ENCODE measurements at regions of chr12 and their contacts with region 1.

Region 1: GRCh38 chr12:50074936-50075807 is 10.0 kb upstream of the SMARCD1 start:
- DNase-seq: peak; percentile 77 to 94 (median 90)
- ATAC-seq: peak; percentile 91 to 97 (median 95)
- H3K4me3 ChIP-seq: no peak overlapping the region
- H3K27ac ChIP-seq: no peak overlapping the region
- H3K4me1 ChIP-seq: no peaks in the 10 kb centered on the region
- H3K27me3 ChIP-seq: no peaks in the 10 kb centered on the region
- CTCF ChIP-seq: peak; percentile 85 to 94 (median 90)

Region 2: DNA sequence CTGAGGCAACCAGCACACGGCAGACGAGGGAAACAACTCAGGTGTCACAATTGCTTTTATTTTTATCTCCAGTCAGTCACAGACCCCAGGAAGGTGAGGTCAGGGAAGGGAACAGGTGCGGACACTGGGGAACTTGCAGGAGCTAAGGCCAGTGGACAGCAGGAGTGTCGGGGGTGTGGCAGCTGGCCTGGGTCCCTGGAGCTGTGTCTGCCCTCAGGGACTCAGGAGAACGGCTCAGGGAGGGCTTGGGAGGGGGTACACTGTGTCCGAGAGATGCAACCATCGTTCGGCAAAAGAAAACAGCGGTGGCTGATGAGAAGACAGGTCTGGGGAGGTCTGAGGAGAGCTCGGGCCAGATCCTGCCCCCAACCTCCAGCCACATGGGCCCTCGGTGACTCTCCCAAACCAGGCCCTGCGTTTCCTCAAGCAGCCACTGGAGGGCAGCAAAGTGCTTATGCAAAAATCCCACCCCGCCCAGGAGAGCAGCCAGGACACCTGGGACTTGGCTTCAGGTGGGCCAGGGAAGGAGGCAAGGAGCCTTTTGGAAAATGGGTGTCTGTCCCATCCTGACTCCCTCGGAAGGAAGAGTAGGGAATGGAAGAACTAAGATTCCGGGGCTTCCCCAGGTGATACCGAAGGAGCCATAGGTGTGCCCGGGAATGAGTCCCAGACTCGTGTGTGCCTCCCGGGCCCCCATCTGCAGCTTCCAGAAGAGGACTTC is 208.2 kb before region 1 on chr12:
- intact Hi-C with region 1: loop called in 1 of 3 experiments (anchors 10 kb)
- DNase-seq: peak; percentile 55 to 90 (median 81)
- ATAC-seq: peak; percentile 73 to 91 (median 81)
- H3K4me3 ChIP-seq: no peak overlapping the region
- H3K27ac ChIP-seq: no peak overlapping the region
- H3K4me1 ChIP-seq: peaks cover 3 to 12% (median 5%) of the 10 kb centered on the region in 3 donors
- H3K27me3 ChIP-seq: no peaks in the 10 kb centered on the region
- CTCF ChIP-seq: peak; percentile 91 to 97 (median 96)

Region 3: GRCh38 chr12:49967042-49967776 is 108.0 kb before region 1 on chr12:
- intact Hi-C with region 1: loop called in 1 of 3 experiments (anchors 5 kb)
- DNase-seq: peak; percentile 81 to 99 (median 94)
- ATAC-seq: peak; percentile 77 to 91 (median 84)
- H3K4me3 ChIP-seq: peak overlapping the region; percentile 2 to 40 (median 14)
- H3K27ac ChIP-seq: no peak overlapping the region
- H3K4me1 ChIP-seq: peaks cover 6 to 11% (median 9%) of the 10 kb centered on the region in 3 donors
- H3K27me3 ChIP-seq: no peaks in the 10 kb centered on the region
- CTCF ChIP-seq: peak; percentile 63 to 77 (median 70)

Region 4: GRCh38 chr12:50174971-50175715 is 100.0 kb after region 1 on chr12:
- intact Hi-C with region 1: loop called in 2 of 3 experiments (anchors 5 to 10 kb)
- DNase-seq: no peak
- ATAC-seq: peak; percentile 36 to 84 (median 76)
- H3K4me3 ChIP-seq: no peak overlapping the region
- H3K27ac ChIP-seq: no peak overlapping the region
- H3K4me1 ChIP-seq: no peaks in the 10 kb centered on the region
- H3K27me3 ChIP-seq: no peaks in the 10 kb centered on the region
- CTCF ChIP-seq: peak; percentile 32 to 59 (median 54)

Region 5: DNA sequence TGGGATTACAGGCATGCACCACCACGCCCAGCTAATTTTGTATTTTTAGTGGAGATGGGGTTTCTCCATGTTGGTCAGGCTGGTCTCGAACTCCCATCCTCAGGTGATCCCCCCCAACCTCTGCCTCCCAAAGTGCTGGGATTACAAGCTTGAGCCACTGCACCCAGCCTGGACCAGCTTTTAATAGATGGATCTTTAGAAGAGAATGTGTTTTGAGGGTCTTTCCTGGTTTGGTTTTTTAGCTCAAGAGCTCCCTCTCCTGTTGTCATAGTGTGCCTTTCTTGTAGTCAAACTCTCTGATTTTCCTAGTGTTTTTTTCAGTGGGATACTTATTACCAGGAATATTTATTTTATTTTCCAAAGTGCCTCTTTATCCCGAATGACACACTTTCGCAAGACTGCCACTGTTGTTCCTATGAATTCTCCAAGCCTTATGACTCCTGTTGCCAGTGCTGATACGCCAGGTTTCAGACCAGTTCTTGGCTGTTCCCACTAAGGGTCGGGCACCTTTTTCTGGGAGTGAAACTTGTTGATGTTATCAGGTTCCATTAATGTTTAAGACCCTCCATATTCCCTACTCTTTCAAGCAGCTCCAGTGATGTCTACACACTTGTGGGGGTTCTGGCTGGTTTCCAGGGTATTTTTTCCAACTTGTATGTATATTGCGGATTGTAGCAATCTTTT is 239.6 kb after region 1 on chr12:
- intact Hi-C with region 1: loop called in 1 of 3 experiments (anchors 10 kb)
- DNase-seq: no peak
- ATAC-seq: peak in 2 of 4 donors; percentile 42 to 43
- H3K4me3 ChIP-seq: no peak overlapping the region
- H3K27ac ChIP-seq: no peak overlapping the region
- H3K4me1 ChIP-seq: no peaks in the 10 kb centered on the region
- H3K27me3 ChIP-seq: no peaks in the 10 kb centered on the region
- CTCF ChIP-seq: peak in 2 of 4 donors; percentile 17 to 23

Measured in pancreas (tissue), 10 donors.